Dendritic cell treated with granulocyte-macrophage colony-stimulating factor and Interleukin-4, amounts not matched to agents 40 ng/mL and 50 ng/mL, for 4 days (primary cell): ENCODE measurements at regions of chr2 and their contacts with region 1.

Region 1: GRCh38 chr2:226791487-226792081 is 8.0 kb downstream of the IRS1 start:
- H3K4me3 Mint-ChIP-seq: peak overlapping the region; percentile 89
- H3K27ac Mint-ChIP-seq: peak overlapping the region; percentile 95
- H3K4me1 Mint-ChIP-seq: peaks cover 11% of the 10 kb centered on the region
- H3K27me3 Mint-ChIP-seq: peaks cover 34% of the 10 kb centered on the region

Region 2: GRCh38 chr2:226683196-226683595 is 108.4 kb before region 1 on chr2:
- intact Hi-C with region 1: no loop called
- H3K4me3 Mint-ChIP-seq: no peak overlapping the region
- H3K27ac Mint-ChIP-seq: no peak overlapping the region
- H3K4me1 Mint-ChIP-seq: no peaks in the 10 kb centered on the region
- H3K27me3 Mint-ChIP-seq: peaks cover 12% of the 10 kb centered on the region

Region 3: DNA sequence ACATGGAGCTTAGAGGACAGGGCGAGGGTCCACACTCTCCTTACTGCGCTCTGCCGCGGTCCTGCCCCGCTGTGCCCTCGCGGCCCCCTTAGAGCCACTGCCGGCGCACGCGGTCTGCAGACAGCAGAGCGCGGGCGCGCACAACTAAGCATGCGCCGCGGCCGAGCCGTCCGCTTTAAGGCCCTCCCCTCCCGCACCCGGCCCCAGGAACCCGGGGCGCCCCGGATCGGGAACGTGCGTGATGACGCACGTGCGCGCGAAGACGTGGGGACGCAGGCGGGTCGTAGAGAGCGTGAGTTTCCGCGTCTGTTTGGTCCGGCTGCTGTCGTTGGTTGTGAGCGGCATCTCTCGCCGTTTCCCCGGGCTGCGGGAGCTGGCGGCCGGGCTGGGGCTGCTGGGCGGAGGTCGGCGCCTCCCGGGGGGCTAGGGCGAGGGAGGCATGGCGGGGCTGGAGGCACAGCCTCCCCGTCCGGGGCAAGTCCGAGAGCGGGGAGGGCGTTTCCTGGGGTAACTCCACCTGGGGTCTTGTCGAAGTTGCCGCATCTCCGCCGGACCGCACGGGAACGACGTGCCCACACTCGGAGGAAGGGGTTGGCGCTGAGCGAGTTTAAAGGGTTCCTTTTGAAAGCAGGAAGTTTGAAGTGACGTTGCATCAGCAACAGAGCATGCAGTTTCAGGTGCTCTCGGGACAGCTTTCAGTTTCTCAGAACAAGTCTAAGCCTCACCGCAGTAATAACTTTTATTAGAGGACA is 44.4 kb after region 1 on chr2 and contains the start of gene RHBDD1:
- intact Hi-C with region 1: loop called (anchors 5 kb)
- H3K4me3 Mint-ChIP-seq: peak within 1 kb of the TSS; percentile 87
- H3K27ac Mint-ChIP-seq: peak within 1 kb of the TSS; percentile 99
- H3K4me1 Mint-ChIP-seq: peaks cover 18% of the 10 kb centered on the region
- H3K27me3 Mint-ChIP-seq: no peaks in the 10 kb centered on the region